Activated B cell treated with CpG ODN at 0.5 μM for 24 hours (primary cell): ENCODE measurements at regions of chr1 and their contacts with region 1.

Region 1: GRCh38 chr1:160006312-160006940 is 25.4 kb downstream of the PIGM start:
- DNase-seq: peak; percentile 56
- ATAC-seq: peak; percentile 83
- H3K4me3 Mint-ChIP-seq: no peak overlapping the region
- H3K27ac Mint-ChIP-seq: no peak overlapping the region
- H3K4me1 Mint-ChIP-seq: no peaks in the 10 kb centered on the region
- H3K27me3 Mint-ChIP-seq: peaks cover 10% of the 10 kb centered on the region
- CTCF ChIP-seq: peak; percentile 33

Region 2: DNA sequence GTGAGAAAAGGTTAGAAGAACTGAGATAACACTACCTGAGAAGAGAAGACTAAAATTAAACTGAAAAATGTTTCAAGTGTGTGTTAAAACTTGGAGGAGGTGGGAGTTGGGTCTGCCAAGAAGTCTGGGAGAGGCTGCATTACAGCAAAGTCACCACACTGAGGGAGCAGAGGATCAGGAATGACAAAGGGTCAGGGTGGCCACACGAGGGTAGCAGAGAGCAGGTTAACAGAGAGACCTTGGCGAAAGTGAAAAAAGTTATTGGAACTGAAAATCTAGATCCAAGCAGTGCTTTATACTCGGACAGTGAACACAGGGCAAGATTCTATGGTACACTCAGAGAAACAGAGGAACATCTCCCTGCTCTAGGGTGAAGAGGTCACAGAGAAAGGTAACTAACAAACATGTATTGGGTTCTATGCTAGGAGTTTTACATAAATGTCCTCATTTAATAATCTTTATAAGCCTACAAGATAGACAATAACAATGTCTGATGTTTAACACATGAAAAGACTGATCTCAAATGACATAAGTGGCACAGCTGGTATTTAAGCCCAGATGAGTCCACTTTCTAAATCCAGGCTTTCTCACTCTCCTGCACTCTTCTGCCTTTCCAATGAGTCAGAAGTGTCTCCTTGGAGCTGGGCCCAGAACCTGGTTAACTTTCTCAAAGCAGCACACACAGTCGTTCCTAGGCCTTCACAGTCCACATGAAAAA is 845.3 kb before region 1 on chr1:
- CTCF ChIA-PET with region 1: interaction called, 5 read pairs
- POLR2A ChIA-PET with region 1: no interaction called
- intact Hi-C with region 1: loop called (anchors 2 kb)
- DNase-seq: peak; percentile 49
- ATAC-seq: peak; percentile 98
- H3K4me3 Mint-ChIP-seq: no peak overlapping the region
- H3K27ac Mint-ChIP-seq: no peak overlapping the region
- H3K4me1 Mint-ChIP-seq: peaks cover 7% of the 10 kb centered on the region
- H3K27me3 Mint-ChIP-seq: no peaks in the 10 kb centered on the region
- CTCF ChIP-seq: peak; percentile 38

Region 3: GRCh38 chr1:159780583-159781582 is 225.5 kb before region 1 on chr1 and contains the start of gene DUSP23:
- CTCF ChIA-PET with region 1: interaction called, 5 read pairs
- POLR2A ChIA-PET with region 1: no interaction called
- intact Hi-C with region 1: loop called (anchors 1 kb)
- DNase-seq: peak; percentile 93
- ATAC-seq: peak; percentile 98
- H3K4me3 Mint-ChIP-seq: peak within 1 kb of the TSS; percentile 83
- H3K27ac Mint-ChIP-seq: peak within 1 kb of the TSS; percentile 68
- H3K4me1 Mint-ChIP-seq: peaks cover 12% of the 10 kb centered on the region
- H3K27me3 Mint-ChIP-seq: peaks cover 3% of the 10 kb centered on the region
- CTCF ChIP-seq: no peak
- total RNA-seq, gene DUSP23: 15.5 and 15.7 TPM in 2 replicates

Region 4: DNA sequence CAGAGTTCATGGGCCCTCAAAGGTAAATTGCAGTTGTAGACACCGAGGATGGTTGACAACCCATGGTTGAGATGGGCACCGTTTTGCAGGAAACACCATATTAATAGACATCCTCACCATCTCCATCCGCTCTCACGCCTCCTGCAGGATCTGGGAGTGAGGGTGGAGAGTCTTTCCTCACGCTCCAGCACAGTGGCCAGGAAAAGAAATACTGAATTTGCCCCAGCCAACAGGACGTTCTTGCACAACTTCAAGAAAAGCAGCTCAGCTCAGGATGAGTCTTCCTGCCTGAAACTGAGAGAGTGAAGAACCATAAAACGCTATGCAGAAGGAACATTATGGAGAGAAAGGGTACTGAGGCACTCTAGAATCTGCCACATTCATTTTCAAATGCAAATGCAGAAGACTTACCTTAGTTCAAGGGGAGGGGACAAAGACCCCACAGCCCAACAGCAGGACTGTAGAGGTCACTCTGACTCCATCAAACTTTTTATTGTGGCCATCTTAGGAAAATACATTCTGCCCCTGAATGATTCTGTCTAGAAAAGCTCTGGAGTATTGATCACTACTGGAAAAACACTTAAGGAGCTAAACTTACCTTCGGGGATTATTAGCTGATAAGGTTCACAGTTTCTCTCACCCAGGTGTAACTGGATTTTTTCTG is 170.4 kb before region 1 on chr1:
- CTCF ChIA-PET with region 1: interaction called, 4 read pairs
- POLR2A ChIA-PET with region 1: no interaction called
- intact Hi-C with region 1: loop called (anchors 1 kb)
- DNase-seq: no peak
- ATAC-seq: no peak
- H3K4me3 Mint-ChIP-seq: no peak overlapping the region
- H3K27ac Mint-ChIP-seq: no peak overlapping the region
- H3K4me1 Mint-ChIP-seq: peaks cover 7% of the 10 kb centered on the region
- H3K27me3 Mint-ChIP-seq: no peaks in the 10 kb centered on the region
- CTCF ChIP-seq: no peak

Region 5: GRCh38 chr1:159924981-159925712 is 81.3 kb before region 1 on chr1 and contains the start of gene TAGLN2:
- CTCF ChIA-PET with region 1: interaction called, 15 read pairs
- POLR2A ChIA-PET with region 1: interaction called, 4 read pairs
- intact Hi-C with region 1: loop called (anchors 5 kb)
- DNase-seq: peak; percentile 94
- ATAC-seq: peak; percentile 69
- H3K4me3 Mint-ChIP-seq: peak within 1 kb of the TSS; percentile 99
- H3K27ac Mint-ChIP-seq: peak within 1 kb of the TSS; percentile 99
- H3K4me1 Mint-ChIP-seq: peaks cover 56% of the 10 kb centered on the region
- H3K27me3 Mint-ChIP-seq: no peaks in the 10 kb centered on the region
- CTCF ChIP-seq: no peak
- total RNA-seq, gene TAGLN2: 327 and 364 TPM in 2 replicates

Region 6: GRCh38 chr1:160018900-160019299 is 12.5 kb after region 1 on chr1:
- CTCF ChIA-PET with region 1: interaction called, 16 read pairs
- POLR2A ChIA-PET with region 1: no interaction called
- intact Hi-C with region 1: no loop called
- DNase-seq: no peak
- ATAC-seq: no peak
- H3K4me3 Mint-ChIP-seq: no peak overlapping the region
- H3K27ac Mint-ChIP-seq: no peak overlapping the region
- H3K4me1 Mint-ChIP-seq: no peaks in the 10 kb centered on the region
- H3K27me3 Mint-ChIP-seq: peaks cover 8% of the 10 kb centered on the region
- CTCF ChIP-seq: no peak